Cardiac septum (tissue), 1 donor: ENCODE measurements at regions of chr1 and their contacts with region 1.

Region 1: GRCh38 chr1:52056163-52056936 is at the start of gene BTF3L4:
- DNase-seq: peak; percentile 98
- total RNA-seq, gene BTF3L4: 33.5 TPM

Region 2: GRCh38 chr1:50959913-50960844 is 1096.2 kb before region 1 on chr1 and contains the start of gene FAF1:
- intact Hi-C with region 1: loop called (anchors 10 kb)
- DNase-seq: peak; percentile 99
- total RNA-seq, gene FAF1: 81.0 TPM

Region 3: GRCh38 chr1:51956528-51957509 is 99.5 kb before region 1 on chr1:
- intact Hi-C with region 1: no loop called
- DNase-seq: no peak